Heart left ventricle (tissue), 16 donors: ENCODE measurements at regions of chr15 and their contacts with region 1.

Region 1: DNA sequence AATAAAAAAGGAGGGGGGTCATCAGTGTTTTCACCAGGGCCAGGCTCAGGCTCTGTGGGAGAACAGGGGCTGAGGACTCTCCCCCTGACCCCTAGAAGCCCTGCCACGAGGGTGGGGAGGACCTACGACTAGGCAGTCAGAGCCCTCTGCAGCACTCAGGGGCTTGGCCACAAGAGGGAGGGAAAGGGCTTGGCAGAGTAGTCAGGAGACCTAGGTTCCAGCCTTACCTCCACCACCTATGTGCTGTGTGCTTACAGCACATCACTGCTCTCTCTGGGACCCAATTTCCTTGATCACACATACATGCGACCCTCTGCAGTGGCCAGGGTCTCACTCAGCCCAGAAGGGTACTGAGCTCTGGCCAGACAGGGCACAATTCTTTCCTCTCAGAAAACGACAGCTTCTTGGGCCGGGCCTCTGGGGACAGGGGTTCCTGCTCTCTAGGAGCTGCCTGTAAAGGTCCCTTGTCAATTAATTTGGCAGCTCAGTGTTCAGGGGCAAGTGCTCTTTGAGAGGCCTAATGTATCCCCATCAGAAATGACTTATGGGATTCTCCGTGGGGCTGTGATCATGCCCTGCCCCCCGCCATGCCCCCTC is 16.4 kb upstream of the SKIC8 start:
- DNase-seq: peak in 1 of 5 donors; percentile 12
- ATAC-seq: no peak
- H3K4me3 ChIP-seq: no peak overlapping the region
- H3K27ac ChIP-seq: no peak overlapping the region
- H3K4me1 ChIP-seq: no peaks in the 10 kb centered on the region
- H3K27me3 ChIP-seq: peaks cover 0 to 5% (median 0%) of the 10 kb centered on the region in 9 donors
- CTCF ChIP-seq: no peak
- POLR2A ChIP-seq: no peak

Region 2: DNA sequence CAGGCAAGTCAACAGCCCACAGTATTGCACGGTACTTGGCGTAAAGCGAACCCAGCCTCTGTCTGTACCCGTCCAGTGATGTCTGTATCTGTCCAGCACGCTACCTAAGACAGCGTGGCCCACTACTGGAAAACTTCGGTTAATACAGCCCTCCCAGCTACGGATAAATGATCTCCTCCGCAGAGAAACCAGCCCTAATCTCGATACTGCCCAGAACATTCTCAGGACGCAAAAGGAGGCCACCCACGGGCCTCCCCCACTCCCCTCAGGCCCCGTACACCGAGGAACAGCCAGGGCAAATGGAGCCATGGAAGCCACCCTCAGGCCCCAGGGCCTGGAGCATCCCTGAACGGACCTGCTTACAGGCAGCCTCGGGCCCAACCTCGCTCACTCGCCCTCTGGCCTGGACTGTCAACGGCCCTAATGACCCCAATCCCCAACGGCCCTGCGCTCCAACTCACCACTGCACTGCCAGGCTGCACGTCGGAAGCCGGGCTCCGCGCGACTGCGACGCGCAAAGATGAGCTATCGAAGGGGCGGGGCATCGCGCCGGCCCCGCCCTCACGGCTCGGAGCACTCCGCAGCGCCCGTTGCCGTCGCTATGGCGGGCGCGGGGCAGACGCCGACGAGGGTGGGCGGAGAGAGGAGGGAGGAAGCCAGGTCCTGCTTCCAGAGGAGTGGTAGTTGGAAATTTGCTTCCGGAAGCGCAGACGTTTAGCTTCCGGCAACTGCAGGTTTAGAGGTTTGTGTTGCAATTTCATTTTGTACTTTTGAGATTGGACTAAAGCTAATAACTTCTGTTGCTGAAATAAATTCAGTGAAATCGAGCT is 16.5 kb before region 1 on chr15 and contains the start of gene SKIC8:
- intact Hi-C with region 1: no loop called
- DNase-seq: peak; percentile 91 to 96 (median 94)
- ATAC-seq: peak; percentile 99 to 100 (median 99)
- H3K4me3 ChIP-seq: peak within 1 kb of the TSS; percentile 64 to 98 (median 87)
- H3K27ac ChIP-seq: peak within 1 kb of the TSS; percentile 4 to 87 (median 76)
- H3K4me1 ChIP-seq: peaks cover 0 to 19% (median 10%) of the 10 kb centered on the region in 12 donors
- H3K27me3 ChIP-seq: peaks cover 0 to 8% (median 0%) of the 10 kb centered on the region in 9 donors
- CTCF ChIP-seq: no peak
- POLR2A ChIP-seq: peak in 1 of 2 donors; percentile 71
- total RNA-seq, gene SKIC8: 20.8 to 34.4 (median 27.8) TPM

Region 3: DNA sequence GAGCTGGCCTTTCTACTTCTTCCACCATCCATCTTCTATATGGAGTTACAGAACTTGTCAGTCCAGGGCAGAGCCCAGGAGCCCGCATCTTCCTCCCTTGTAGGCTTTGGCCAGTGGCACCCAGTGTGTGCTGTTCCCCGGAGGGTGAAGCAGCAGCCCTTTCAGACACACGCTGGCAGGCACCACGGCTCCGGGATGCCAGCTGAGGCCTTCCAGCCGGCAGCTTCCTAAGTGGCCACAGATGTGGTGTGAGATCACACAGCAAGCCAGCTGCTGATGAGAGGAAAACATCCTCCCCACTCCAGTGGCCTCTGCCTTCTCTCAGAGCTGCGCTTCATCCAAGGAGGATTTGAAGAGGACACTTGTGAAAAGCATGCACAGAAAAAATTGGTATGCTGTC is 48.4 kb after region 1 on chr15:
- intact Hi-C with region 1: no loop called
- DNase-seq: peak in 1 of 5 donors; percentile 47
- ATAC-seq: no peak
- H3K4me3 ChIP-seq: no peak overlapping the region
- H3K27ac ChIP-seq: no peak overlapping the region
- H3K4me1 ChIP-seq: peaks cover 0 to 7% (median 0%) of the 10 kb centered on the region in 12 donors
- H3K27me3 ChIP-seq: no peaks in the 10 kb centered on the region
- CTCF ChIP-seq: no peak
- POLR2A ChIP-seq: no peak

Region 4: GRCh38 chr15:78374436-78375393 is 58.9 kb after region 1 on chr15:
- intact Hi-C with region 1: no loop called
- DNase-seq: no peak
- ATAC-seq: peak in 1 of 4 donors; percentile 26
- H3K4me3 ChIP-seq: no peak overlapping the region
- H3K27ac ChIP-seq: no peak overlapping the region
- H3K4me1 ChIP-seq: peaks cover 0 to 2% (median 0%) of the 10 kb centered on the region in 12 donors
- H3K27me3 ChIP-seq: no peaks in the 10 kb centered on the region
- CTCF ChIP-seq: no peak
- POLR2A ChIP-seq: no peak

Region 5: DNA sequence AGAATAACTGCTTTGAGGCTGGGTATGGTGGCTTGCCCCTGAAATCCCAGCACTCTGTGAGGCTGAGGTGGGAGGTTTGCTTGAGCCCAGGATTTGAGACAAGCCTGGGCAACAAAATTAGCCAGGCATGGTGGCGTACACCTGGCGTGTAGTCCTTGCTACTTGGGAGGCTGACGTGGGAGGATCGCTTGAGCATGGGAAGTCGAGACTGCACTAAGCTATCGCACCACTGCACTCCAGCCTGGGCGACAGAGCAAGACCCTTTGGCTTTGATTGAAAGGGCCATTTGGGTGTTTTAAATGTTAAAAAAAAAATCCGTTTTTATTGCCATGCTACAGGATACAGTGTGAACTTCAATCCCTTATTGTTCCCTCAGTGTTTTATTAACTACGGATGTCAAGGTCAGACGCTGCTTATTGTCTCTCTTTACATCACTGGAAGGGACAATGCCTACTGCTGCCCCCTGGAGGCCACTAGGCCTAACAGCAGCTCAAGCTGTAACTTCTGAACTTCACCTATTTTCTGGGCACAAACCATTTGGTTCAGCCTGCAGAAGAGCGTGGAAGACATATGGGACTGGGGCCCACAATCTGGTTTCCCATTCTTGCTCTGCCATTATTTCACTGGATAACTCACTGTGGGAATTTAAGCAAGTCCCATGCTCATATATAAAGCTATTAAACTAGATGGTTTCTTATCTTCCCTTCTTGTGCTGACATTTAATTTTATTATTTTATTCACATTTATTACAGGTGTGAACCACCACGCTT is 107.0 kb after region 1 on chr15:
- intact Hi-C with region 1: loop called in 1 of 10 experiments (anchors 5 kb)
- DNase-seq: peak; percentile 39 to 67 (median 57)
- ATAC-seq: peak in 3 of 4 donors; percentile 53 to 75 (median 74)
- H3K4me3 ChIP-seq: no peak overlapping the region
- H3K27ac ChIP-seq: no peak overlapping the region
- H3K4me1 ChIP-seq: peaks cover 0 to 11% (median 0%) of the 10 kb centered on the region in 12 donors
- H3K27me3 ChIP-seq: no peaks in the 10 kb centered on the region
- CTCF ChIP-seq: peak; percentile 88 to 96 (median 93)
- POLR2A ChIP-seq: no peak

Region 6: DNA sequence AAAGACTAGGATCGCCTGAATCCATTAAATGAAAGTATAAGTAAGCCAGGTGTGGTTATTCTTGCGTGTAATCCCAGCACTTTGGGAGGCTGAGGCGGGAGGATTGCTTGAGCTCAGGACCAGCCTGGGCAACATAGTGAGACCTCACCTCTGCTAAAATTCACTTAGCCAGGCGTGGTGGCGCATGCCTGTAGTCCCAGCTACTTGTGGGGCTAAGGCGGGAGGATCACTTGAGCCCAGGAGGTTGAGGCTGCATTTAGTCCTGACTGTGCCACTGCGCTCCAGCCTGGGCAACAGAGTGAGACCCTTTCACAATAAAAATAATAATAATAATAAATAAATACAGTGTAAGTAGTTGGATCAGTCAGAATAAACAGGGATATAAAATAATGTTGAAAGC is 166.1 kb after region 1 on chr15:
- intact Hi-C with region 1: loop called in 1 of 10 experiments (anchors 10 kb)
- DNase-seq: no peak
- ATAC-seq: no peak
- H3K4me3 ChIP-seq: no peak overlapping the region
- H3K27ac ChIP-seq: no peak overlapping the region
- H3K4me1 ChIP-seq: peaks cover 0 to 7% (median 0%) of the 10 kb centered on the region in 12 donors
- H3K27me3 ChIP-seq: no peaks in the 10 kb centered on the region
- CTCF ChIP-seq: no peak
- POLR2A ChIP-seq: no peak